Heart left ventricle (tissue), 16 donors: ENCODE measurements at regions of chr11 and their contacts with region 1.

Region 1: DNA sequence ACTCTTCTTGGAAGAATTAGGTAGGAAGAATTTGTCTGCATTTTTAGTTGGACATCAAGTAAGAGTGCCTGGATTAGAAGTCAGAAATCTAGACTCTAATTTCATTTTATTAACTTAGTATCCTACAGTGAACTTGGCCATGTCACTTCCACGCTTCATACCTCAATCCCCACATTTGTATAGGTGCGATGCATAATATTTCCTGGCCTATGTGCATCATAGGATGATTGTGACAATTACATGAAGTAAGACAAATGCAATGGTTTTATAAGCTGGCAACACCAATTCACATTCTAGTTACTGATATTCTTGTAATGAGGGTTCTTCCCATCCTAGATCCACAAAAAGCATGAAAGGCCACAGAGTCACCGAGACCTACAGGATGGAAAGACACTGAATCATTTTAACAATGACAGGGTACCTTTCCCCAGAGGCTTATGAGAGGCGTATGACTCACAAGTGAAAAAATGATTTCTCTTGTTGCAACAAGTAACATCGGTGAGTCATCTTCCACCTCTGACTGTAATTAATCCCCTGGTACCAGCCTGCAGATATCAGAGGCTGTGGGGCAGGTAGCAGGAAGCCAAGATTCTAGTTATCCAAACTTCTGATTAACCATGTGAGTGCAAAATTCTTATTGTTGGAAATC is 56.0 kb upstream of the OR5AK2 start:
- DNase-seq: no peak
- ATAC-seq: no peak
- H3K4me3 ChIP-seq: no peak overlapping the region
- H3K27ac ChIP-seq: no peak overlapping the region
- H3K4me1 ChIP-seq: no peaks in the 10 kb centered on the region
- H3K27me3 ChIP-seq: no peaks in the 10 kb centered on the region
- CTCF ChIP-seq: no peak
- POLR2A ChIP-seq: no peak

Region 2: DNA sequence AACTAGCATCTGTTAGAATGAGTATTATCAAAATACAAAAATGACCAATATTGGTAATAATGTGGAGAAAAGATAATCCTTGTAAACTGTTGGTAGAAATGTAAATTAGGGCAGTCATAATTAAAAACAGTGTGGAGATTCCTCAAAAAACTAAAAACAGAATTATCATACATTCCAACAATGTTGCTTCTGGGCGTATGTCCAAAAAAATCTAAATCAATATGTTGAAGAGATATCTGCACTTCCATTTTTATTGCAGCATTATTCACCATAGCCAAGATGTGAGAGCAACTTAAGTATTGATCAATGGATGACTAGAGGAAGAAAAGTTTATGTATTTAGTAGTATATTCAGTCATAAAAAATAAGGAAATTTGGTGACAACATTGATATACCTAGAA is 124.4 kb before region 1 on chr11:
- intact Hi-C with region 1: no loop called
- DNase-seq: no peak
- ATAC-seq: no peak
- H3K4me3 ChIP-seq: no peak overlapping the region
- H3K27ac ChIP-seq: no peak overlapping the region
- H3K4me1 ChIP-seq: no peaks in the 10 kb centered on the region
- H3K27me3 ChIP-seq: no peaks in the 10 kb centered on the region
- CTCF ChIP-seq: no peak
- POLR2A ChIP-seq: no peak

Region 3: DNA sequence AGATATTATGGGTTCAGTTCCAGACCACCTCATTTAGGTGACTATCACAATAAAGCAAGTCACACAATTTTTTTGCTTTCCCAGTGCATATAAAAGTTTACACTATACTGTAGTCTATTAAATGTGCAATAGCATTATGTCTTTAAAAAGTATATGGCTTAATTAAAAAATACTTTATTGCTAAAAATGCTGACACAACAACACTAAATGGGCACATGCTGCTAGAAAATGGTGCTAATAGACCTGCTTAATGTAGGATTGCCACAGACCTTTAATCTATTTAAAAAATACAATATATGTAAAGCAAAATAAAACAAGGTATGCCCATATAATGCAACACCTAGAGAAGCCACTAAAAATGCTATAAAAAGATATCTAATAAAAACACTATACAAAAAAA is 28.9 kb after region 1 on chr11:
- intact Hi-C with region 1: loop called in 1 of 10 experiments (anchors 2 kb)
- DNase-seq: no peak
- ATAC-seq: no peak
- H3K4me3 ChIP-seq: no peak overlapping the region
- H3K27ac ChIP-seq: no peak overlapping the region
- H3K4me1 ChIP-seq: peaks cover 0 to under 1% (median 0%) of the 10 kb centered on the region in 12 donors
- H3K27me3 ChIP-seq: no peaks in the 10 kb centered on the region
- CTCF ChIP-seq: no peak
- POLR2A ChIP-seq: no peak

Region 4: DNA sequence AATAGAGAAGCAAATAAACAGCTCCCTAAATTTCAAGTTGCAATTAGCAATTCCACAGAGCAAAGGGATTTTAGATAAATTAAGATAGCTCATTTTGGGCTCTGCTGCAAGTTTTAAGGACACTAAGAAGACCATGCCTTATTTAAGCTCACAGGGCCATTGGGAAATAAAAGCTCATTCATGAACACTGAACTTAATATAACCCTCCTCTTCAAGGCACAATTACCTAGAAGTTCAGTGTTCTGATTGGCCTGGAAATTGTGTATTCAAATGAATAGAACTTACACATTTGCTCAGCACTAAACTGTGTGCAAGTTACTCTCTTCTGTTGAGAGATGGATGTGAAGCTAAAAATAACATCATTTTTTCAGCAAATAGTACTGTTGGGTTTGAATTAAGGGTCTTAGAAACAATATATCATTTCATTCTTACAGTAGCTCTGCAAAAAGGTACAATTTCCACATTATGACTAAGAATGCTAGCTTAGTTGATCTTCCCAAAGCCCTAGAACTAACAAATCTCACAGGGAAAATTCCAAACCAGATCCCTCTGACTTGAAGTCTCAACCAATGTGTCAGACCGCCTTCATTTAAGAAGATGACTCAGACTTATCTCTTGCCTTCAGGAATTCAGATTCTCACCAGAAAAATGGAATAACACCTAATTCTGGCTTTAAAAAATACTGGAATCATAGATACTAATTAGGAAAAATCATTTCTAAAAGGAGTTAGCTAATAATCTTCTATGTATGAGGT is 161.7 kb after region 1 on chr11:
- intact Hi-C with region 1: no loop called
- DNase-seq: no peak
- ATAC-seq: no peak
- H3K4me3 ChIP-seq: no peak overlapping the region
- H3K27ac ChIP-seq: no peak overlapping the region
- H3K4me1 ChIP-seq: peaks cover 0 to 11% (median 0%) of the 10 kb centered on the region in 12 donors
- H3K27me3 ChIP-seq: no peaks in the 10 kb centered on the region
- CTCF ChIP-seq: no peak
- POLR2A ChIP-seq: no peak

Region 5: DNA sequence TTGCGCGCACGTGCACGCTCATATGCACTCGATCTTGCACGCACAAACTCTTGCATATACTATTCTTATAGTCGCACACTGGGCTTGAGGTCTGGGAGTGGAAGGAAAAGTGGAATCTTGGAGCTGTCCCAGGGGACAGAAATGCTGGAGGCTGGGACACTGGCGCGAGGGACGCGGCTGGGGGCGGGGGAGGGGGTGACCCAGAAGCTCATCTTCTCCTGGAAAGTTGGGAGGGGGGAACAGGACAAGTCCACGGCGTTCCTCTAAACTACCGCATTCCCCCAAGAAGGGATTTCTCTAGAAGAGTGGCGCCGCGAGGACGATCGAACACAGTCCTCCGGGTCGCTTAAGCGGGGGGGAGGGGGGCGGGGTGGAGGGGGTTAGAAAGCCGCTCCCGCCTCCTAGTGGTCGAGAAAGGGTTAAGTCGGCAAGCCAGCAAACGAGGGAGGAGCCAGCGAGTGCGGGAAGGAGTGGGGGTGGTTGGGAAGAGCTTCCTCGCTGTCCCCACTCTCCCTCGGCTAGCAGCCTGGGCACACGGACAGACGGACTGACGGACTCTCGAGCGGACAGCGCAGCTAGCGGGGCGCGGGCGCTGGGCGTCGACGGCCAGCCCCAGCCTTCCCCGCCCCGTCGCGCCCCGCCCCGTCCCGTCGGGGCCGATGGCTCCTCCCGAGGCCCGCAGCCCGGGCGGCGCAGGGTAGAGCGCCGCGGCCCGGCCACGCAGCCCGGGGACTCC is 527.5 kb after region 1 on chr11 and contains the start of gene RTN4RL2:
- intact Hi-C with region 1: no loop called
- DNase-seq: peak; percentile 52 to 73 (median 54)
- ATAC-seq: peak in 3 of 4 donors; percentile 15 to 44 (median 40)
- H3K4me3 ChIP-seq: peak within 1 kb of the TSS; percentile 30 to 61 (median 54)
- H3K27ac ChIP-seq: peak within 1 kb of the TSS in 2 of 12 donors; percentile 26 to 50
- H3K4me1 ChIP-seq: peaks cover 3 to 43% (median 25%) of the 10 kb centered on the region in 12 donors
- H3K27me3 ChIP-seq: peaks cover 9 to 55% (median 32%) of the 10 kb centered on the region in 9 donors
- CTCF ChIP-seq: peak in 6 of 12 donors; percentile 11 to 37 (median 22)
- POLR2A ChIP-seq: no peak
- total RNA-seq, gene RTN4RL2: 0.58 to 2.1 (median 1.1) TPM

Region 6: DNA sequence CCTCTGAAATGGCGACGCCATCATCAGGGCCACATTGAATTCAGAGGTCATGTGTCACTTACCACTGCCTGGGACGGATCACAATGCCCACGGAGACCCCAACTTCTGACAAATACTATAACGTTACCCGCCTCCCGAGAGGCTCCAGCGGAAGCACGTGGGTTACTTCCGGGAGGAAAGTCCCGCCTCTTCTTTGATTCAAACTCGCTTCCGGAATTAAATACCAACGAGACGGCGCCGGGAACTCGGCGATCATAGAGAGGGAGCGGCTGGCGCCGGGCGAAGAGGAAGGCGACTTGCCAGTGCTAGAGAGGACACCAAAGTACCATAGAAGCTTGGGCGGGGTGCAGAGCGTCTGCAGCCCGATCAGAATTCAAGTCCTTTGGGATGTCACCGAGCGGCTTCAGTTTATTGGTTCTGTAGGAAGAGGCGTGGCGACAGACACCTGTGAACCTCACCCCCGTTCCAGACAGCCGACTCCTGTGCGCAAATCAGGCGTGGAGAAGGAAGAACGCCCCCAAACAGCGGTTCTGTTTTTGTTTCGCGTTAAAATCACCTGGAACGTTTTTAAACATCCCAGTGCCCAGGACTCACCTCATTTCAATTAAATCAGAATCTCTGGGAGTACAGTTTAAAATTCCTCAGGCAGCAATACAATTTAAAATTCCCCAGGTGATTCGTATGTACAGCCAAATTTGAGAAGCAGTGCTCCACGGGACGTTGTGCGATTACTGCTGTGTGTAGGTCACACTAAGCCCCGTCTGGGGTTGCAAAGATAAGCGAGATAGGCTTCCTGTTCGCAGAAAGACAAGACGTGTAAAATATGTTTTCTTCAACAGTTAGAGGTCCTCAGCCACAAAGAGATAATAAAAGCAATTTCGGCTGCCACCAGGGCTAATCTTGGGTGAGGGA is 598.2 kb after region 1 on chr11 and contains the start of gene TIMM10:
- intact Hi-C with region 1: no loop called
- DNase-seq: peak; percentile 94 to 97 (median 96)
- ATAC-seq: peak; percentile 97 to 99 (median 98)
- H3K4me3 ChIP-seq: peak within 1 kb of the TSS; percentile 55 to 91 (median 72)
- H3K27ac ChIP-seq: peak within 1 kb of the TSS in 11 of 12 donors; percentile 39 to 81 (median 73)
- H3K4me1 ChIP-seq: peaks cover 0 to 21% (median 11%) of the 10 kb centered on the region in 12 donors
- H3K27me3 ChIP-seq: no peaks in the 10 kb centered on the region
- CTCF ChIP-seq: no peak
- POLR2A ChIP-seq: peak in 1 of 2 donors; percentile 25
- total RNA-seq, gene TIMM10: 36.6 to 81.5 (median 46.4) TPM